ENCODE measurements at regions of chr9 and their contacts with region 1.

Region 1: DNA sequence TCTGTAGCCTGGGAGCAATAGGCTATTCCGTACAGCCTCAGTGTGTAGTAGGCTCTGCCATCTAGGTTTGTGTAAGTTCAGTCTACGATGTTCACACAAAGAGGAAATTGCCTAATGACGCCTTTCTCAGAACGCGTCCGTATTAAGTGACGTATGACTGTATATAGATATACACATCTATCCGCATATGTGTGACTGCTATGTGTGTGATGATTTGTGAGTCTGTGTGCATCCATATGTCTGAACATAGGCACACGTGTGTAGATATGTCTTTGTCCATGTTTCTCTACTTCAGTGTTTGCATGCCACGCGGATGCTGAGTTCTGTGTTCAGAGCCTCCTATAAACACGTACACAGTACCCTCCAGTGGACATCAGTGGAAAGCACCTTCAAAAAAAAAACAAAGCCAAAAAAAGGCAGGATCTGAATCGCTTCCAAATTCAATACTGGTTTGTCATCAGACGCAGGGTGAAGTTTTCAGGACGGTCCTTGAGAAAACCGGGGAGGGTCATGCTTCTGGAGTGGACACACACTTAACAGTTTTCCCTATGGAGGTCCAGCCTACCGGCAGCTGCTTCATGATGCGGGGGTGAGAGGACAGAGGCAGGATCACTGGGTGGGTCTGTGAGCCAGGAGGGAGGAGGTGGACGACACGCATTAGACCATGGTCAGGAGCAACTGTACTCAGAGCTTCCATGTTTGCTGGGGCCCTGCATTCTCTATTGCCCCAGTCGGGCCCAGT is 29.5 kb upstream of the ALDH1B1 start:
- DNase-seq: peak; percentile 40 to 54 (median 51)
- H3K4me3 ChIP-seq: no peak overlapping the region
- H3K27ac ChIP-seq: no peak overlapping the region
- H3K4me1 ChIP-seq: peaks cover 8% of the 10 kb centered on the region
- H3K27me3 ChIP-seq: no peaks in the 10 kb centered on the region
- CTCF ChIP-seq: peak; percentile 48 to 63 (median 55)
- EP300 ChIP-seq: no peak
- POLR2A ChIP-seq: no peak

Region 2: DNA sequence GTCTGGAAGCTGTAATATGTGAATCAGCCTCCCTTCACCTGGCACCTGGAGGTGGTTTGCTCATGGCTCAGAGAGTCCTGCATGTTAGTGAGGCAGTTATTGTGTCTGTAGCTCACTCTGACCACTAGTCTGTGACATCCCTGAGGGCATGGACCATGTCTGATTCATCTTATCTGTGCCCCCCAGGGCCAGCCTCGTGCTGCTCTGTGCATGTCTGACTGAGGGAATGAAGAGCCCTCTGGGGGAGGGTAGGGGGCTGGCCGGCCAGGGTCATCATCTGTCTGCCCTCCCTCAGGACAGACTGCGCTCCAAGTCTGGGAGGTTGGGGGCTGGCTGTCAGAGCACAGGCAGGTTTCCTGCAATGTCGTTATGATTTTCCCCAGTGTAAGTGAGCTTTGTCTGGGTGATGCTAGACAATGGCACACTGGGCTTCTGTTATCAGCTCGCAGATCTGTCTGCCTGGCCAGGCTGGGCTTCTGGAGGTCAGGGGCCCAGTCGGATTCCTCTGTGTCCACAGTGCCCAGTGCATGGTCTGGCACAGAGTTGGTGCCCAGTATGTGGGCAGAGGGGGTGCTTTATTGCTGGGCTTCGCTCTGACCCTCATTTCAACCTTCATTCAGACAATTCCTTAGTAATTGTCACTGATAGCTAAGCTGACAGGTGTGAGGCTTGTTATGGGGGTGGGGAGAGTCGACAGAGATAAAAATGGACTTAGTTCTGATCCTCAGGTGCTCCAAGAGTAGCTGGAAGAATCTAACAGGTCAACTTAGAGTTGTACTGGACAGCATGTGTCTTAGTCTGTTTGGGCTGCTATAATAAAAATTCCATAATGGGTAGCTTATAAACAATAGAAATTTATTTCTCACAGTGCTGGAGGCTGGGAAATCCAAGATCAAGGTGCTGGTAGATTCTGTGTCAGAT is 208.3 kb before region 1 on chr9:
- intact Hi-C with region 1: loop called in 1 of 4 experiments (anchors 10 kb)
- DNase-seq: no peak
- H3K4me3 ChIP-seq: no peak overlapping the region
- H3K27ac ChIP-seq: no peak overlapping the region
- H3K4me1 ChIP-seq: no peaks in the 10 kb centered on the region
- H3K27me3 ChIP-seq: no peaks in the 10 kb centered on the region
- CTCF ChIP-seq: no peak
- EP300 ChIP-seq: no peak
- POLR2A ChIP-seq: no peak

Region 3: GRCh38 chr9:38309324-38310195 is 53.5 kb before region 1 on chr9:
- intact Hi-C with region 1: loop called in 1 of 4 experiments (anchors 10 kb)
- DNase-seq: peak in 1 of 5 donors; percentile 23
- H3K4me3 ChIP-seq: no peak overlapping the region
- H3K27ac ChIP-seq: no peak overlapping the region
- H3K4me1 ChIP-seq: peaks cover 5% of the 10 kb centered on the region
- H3K27me3 ChIP-seq: no peaks in the 10 kb centered on the region
- CTCF ChIP-seq: no peak
- EP300 ChIP-seq: no peak
- POLR2A ChIP-seq: no peak

Region 4: GRCh38 chr9:38417003-38417945 is 54.3 kb after region 1 on chr9:
- intact Hi-C with region 1: loop called in 1 of 4 experiments (anchors 10 kb)
- DNase-seq: no peak
- H3K4me3 ChIP-seq: no peak overlapping the region
- H3K27ac ChIP-seq: no peak overlapping the region
- H3K4me1 ChIP-seq: no peaks in the 10 kb centered on the region
- H3K27me3 ChIP-seq: no peaks in the 10 kb centered on the region
- CTCF ChIP-seq: no peak
- EP300 ChIP-seq: no peak
- POLR2A ChIP-seq: no peak